ENCODE measurements at regions of chr3 and their contacts with region 1.

Region 1: DNA sequence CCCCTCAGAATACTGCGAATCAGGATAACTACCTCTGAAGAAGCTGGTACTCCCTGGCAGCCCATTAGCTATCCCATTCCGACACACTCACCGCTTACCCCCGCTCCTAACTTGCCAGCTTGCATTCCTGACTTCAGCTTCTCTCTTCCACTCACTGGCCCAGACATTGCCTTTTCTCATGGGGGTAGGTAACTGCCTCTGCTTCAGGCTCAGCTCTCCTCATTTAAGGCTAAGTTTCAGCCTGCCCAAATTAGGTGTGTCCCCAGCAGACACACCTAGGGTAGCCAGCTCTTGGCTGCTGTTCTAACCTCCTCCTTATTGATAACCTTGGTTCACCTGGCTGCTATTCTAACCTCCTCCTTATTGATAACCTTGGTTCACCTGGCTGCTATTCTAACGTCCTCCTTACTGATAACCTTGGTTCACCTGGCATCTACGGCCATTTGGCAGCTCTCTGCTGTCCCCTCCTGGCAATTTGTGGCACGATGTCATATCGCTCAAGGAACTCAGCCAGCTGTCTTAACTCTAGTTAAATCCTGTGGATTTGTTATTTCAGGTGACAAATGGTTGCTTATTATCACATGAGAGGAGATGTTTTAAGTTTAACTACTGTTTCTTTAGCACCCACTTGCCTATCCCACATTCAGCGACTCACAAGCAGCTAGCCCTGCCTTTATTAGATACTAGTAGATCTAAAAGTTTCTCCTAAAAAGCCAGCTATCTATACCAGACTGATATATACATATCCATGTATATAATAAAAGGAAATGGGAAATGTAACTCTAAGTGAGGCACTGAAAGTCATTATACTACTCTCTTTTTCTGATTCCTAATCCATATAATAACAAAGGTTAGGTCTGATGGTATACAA is 106.5 kb upstream of the ACP3 start:
- DNase-seq: no peak
- H3K4me3 ChIP-seq: no peak overlapping the region
- H3K27ac ChIP-seq: no peak overlapping the region
- H3K4me1 ChIP-seq: no peaks in the 10 kb centered on the region
- H3K27me3 ChIP-seq: no peaks in the 10 kb centered on the region
- CTCF ChIP-seq: no peak

Region 2: DNA sequence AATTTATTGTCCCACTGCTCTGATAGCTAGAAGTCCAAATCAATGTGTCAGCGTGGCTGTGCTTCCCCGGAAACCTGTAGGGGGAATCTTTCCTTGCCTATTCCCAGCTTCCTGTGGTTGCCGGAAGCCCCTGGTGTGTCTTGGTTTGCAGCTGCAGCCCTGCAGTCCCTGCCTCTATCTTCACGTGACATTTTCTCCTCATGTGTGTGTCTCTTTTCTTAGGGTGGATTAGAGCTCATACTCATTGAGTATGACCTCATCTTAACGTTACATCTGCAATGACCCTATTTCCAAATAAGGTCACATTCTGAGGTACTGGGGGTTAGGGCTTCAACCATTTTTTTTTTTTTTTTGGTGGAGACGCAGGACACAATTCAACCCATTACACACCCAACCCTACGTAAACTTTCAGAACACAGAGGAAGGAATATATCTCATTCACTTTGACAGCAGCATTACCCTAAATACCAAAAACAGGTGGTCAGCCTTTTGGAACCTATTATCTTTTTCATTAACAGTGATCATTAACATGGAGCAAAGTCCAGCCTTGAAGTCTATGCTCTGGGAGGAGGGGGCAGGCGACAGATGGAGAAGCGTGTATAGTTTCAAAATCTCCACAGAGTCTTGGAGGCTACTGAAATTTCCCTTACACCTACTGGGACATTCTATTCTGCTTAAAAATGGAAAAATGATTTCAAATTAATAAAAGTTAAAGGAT is 1951.3 kb after region 1 on chr3:
- intact Hi-C with region 1: loop called (anchors 10 kb)
- DNase-seq: no peak
- H3K4me3 ChIP-seq: no peak overlapping the region
- H3K27ac ChIP-seq: no peak overlapping the region
- H3K4me1 ChIP-seq: no peaks in the 10 kb centered on the region
- H3K27me3 ChIP-seq: no peaks in the 10 kb centered on the region
- CTCF ChIP-seq: no peak